Kidney (tissue), 22 donors: ENCODE measurements at regions of chr1 and their contacts with region 1.

Region 1: GRCh38 chr1:16978567-16979474 is 1.6 kb downstream of the MFAP2 start:
- DNase-seq: peak in 3 of 5 donors; percentile 60 to 84 (median 70)
- H3K4me3 ChIP-seq: peak overlapping the region in 1 of 3 donors; percentile 40
- H3K27ac ChIP-seq: peak overlapping the region in 1 of 2 donors; percentile 54
- H3K4me1 ChIP-seq: no peaks in the 10 kb centered on the region
- H3K27me3 ChIP-seq: no peaks in the 10 kb centered on the region
- CTCF ChIP-seq: no peak

Region 2: DNA sequence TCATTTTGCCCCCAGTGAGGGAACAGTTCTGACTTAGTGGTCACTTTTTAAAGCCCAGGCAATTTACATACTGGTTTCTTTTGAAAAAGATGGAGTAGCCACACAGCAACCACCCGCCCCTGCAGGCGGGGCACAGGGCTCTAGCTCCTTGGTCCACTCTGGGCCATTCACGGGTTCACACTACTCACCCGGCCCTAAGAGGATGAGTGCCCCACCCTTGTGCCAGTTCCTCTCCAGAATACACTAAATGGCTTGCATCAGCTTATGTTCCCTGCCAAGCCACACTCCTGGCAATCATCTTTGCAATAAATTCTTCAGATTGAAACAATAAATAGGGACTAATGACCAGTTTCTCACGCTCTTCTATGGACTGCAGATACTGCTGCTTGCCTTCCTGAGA is 48.6 kb after region 1 on chr1:
- intact Hi-C with region 1: no loop called
- DNase-seq: no peak
- H3K4me3 ChIP-seq: no peak overlapping the region
- H3K27ac ChIP-seq: peak overlapping the region; percentile 25 to 61
- H3K4me1 ChIP-seq: peaks cover 0 to 2% (median 0%) of the 10 kb centered on the region in 3 donors
- H3K27me3 ChIP-seq: no peaks in the 10 kb centered on the region
- CTCF ChIP-seq: no peak

Region 3: DNA sequence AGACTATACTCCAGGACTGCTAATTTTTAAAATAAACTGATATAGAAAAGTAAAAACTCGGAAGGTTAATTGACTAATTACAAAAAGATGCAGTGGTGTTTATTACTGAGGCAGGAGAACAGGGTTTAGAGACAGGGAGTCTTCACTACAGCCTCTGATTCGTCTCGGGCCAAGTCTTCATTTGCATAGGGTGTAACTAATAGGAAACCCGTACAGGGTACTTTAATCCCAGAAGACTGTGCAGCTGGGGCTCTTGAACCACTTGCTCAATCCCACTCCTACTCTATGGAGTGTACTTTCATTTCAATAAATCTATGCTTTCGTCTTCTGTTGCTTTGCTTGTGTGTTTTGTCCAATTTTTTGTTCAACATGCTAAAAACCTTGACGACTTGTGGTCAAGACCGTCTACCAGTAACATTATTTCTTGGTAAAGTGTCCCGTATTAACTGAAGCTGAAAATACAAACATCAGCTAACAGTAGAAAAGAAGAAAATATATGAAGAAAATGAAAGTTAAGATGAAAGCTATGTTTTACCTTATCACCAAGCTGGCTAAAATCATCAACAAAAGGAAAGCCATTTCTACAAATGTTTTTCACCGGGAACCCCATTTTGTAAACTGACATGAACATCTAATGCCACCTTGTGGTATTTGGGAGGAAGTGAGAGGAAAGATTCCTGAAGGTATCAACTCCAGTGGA is 67.0 kb after region 1 on chr1:
- intact Hi-C with region 1: loop called (anchors 10 kb)
- DNase-seq: peak in 2 of 5 donors; percentile 76 to 80
- H3K4me3 ChIP-seq: peak overlapping the region; percentile 3 to 50 (median 48)
- H3K27ac ChIP-seq: no peak overlapping the region
- H3K4me1 ChIP-seq: peaks cover 0 to 8% (median 2%) of the 10 kb centered on the region in 3 donors
- H3K27me3 ChIP-seq: no peaks in the 10 kb centered on the region
- CTCF ChIP-seq: peak; percentile 80